ENCODE measurements at regions of chr20 and their contacts with region 1.

Region 1: DNA sequence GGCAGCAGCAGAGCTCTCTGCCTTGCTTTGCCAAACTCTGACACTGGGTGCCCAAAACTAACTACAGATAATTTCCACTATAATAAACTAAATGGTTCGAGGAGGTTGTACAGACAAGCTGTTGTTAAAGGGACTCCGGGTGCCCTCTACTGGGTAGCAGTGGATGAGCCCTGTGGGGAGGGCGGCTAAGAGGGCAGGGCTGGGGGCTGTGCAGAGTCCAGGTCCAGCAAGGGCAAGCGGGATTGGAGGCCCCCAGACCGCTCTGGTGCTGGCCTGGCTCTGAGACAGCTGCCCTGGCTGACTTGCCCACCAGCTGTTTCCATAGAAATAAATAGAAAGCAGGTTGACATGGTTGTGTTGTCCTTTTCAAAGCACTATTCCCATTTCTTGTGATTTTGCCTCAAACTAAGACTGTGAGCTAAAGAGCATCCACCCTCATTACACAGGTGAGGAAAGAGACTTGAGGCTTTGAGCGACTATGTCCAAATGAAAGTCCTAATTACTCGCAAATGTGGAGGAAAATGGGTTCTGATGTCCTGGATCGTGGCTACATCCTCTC is 167.6 kb upstream of the CST7 start:
- H3K4me3 ChIP-seq: no peak overlapping the region
- H3K27ac ChIP-seq: no peak overlapping the region
- H3K4me1 ChIP-seq: no peaks in the 10 kb centered on the region
- CTCF ChIP-seq: no peak

Region 2: DNA sequence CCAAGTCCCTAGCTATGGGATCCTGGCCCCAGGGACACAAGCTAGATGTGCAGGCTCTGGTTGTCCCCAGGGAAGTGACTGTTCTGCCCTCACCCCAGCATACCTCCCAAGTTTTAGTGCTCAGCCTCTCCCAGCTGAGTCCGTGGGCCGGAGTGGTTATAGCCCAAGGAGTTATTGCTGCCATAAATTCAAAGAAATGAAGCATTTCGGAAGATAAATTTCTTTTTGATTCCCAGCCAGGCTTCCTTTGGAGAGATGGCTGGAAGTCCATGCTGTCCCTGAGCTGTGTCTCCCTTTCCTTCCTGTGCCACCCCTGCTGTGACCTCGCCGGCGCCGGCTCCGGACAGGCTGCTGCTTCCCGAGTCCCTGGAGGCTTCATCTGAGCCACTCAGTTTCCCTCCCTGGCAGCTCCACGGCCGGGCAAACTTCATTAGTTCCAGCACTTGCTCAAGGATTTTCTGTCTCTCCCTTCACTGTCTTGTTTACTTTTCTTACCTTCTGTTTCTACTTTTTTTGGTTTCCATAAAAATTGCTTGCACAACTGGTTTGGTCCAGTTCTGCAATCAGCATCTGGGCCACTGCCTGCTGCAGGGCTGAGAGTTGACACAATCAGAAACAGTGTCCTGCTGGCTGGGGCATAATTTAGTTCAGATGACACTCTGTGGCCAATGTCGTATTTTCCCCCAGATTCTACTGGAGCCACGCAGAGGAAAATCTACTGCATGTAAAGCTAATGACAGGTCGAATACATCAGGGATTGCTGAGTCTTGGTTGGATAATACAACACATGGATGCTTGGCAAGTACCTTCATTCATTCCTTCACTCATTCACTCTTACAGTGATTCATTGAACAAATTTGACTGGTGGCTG is 86.5 kb before region 1 on chr20:
- CTCF ChIA-PET with region 1: no interaction called
- POLR2A ChIA-PET with region 1: no interaction called
- H3K4me3 ChIP-seq: no peak overlapping the region
- H3K27ac ChIP-seq: no peak overlapping the region
- H3K4me1 ChIP-seq: no peaks in the 10 kb centered on the region
- CTCF ChIP-seq: no peak

Region 3: DNA sequence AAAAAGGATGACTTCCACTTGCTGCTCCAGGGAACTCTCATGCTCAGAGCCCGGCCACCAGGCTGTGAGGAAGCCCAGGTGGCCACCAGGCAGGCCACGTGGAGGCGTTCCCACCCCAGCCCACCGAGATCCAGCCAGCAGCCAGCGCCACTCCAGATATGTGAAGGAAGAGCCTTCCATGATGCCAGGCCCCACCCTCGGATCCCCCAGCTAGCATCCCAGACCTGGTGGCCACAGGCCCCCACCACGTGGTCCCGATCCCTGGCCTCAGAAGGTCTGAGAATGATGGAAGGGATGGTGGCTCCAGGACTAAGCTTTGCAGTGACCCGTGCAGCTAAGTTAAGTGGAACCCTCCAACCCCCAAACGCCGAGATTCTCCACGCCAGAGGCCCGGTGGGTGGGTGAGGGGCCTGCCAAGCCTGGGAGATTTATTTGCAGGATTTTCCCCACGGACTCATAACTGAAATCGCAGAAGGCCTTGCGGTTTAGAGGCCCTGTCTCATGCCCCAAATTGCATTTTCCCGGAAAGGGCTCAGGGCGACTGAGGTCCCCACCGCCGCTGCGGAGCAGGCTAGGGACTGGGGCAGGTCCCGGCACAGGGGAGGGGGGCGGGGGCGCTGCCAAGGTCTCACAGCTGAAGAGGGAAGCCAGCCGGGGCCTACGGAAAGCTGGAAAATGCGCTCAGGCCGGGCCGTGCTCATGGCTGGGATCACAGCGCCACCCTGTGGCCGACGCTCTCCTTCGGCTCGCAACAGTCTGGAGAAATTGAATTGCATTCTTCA is 136.5 kb after region 1 on chr20:
- CTCF ChIA-PET with region 1: interaction called, 10 read pairs
- POLR2A ChIA-PET with region 1: no interaction called
- H3K4me3 ChIP-seq: no peak overlapping the region
- H3K27ac ChIP-seq: no peak overlapping the region; the same call in 1 of the 2 replicates
- H3K4me1 ChIP-seq: no peaks in the 10 kb centered on the region
- CTCF ChIP-seq: peak; percentile 91